Transverse colon (tissue), 4 donors: ENCODE measurements at regions of chr12 and their contacts with region 1.

Region 1: GRCh38 chr12:5083955-5084849 is 40.5 kb downstream of the KCNA5 start:
- DNase-seq: no peak
- H3K4me3 ChIP-seq: no peak overlapping the region
- H3K27ac ChIP-seq: no peak overlapping the region
- H3K4me1 ChIP-seq: no peaks in the 10 kb centered on the region
- H3K27me3 ChIP-seq: peaks cover 3% of the 10 kb centered on the region
- CTCF ChIP-seq: peak; percentile 58 to 65 (median 62)
- EP300 ChIP-seq: no peak
- POLR2A ChIP-seq: no peak

Region 2: DNA sequence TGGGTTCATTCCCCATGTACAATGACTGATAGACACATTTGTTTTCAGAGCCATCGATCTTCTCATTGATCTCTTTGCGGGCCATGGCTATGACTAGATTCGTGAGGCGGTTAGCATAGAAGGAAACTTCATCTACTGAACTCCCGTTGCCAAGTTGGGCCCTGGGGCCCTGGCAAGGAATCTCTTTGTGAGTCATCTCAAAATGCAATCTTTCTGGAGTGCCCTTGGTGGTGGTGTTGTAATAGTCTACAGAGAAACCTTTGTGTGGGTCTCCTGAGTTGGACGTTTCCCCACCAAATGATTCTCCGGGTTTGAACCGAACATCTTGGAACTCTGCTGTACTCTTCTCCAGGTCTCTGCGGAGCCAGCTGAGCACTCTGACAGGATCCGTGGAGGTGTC is 455.8 kb before region 1 on chr12:
- in situ Hi-C with region 1: no loop called
- intact Hi-C with region 1: no loop called
- DNase-seq: no peak
- H3K4me3 ChIP-seq: no peak overlapping the region
- H3K27ac ChIP-seq: no peak overlapping the region
- H3K4me1 ChIP-seq: no peaks in the 10 kb centered on the region
- H3K27me3 ChIP-seq: peaks cover 3% of the 10 kb centered on the region
- CTCF ChIP-seq: no peak
- EP300 ChIP-seq: no peak
- POLR2A ChIP-seq: no peak

Region 3: GRCh38 chr12:5022465-5023061 is 61.6 kb before region 1 on chr12:
- in situ Hi-C with region 1: loop called in 3 of 4 experiments (anchors 5 to 10 kb)
- intact Hi-C with region 1: loop called (anchors 2 kb)
- DNase-seq: peak; percentile 36
- H3K4me3 ChIP-seq: no peak overlapping the region
- H3K27ac ChIP-seq: no peak overlapping the region
- H3K4me1 ChIP-seq: no peaks in the 10 kb centered on the region
- H3K27me3 ChIP-seq: peaks cover 6% of the 10 kb centered on the region
- CTCF ChIP-seq: peak; percentile 78 to 89 (median 86)
- EP300 ChIP-seq: no peak
- POLR2A ChIP-seq: no peak